ENCODE measurements at regions of chr7 and their contacts with region 1.

Region 1: DNA sequence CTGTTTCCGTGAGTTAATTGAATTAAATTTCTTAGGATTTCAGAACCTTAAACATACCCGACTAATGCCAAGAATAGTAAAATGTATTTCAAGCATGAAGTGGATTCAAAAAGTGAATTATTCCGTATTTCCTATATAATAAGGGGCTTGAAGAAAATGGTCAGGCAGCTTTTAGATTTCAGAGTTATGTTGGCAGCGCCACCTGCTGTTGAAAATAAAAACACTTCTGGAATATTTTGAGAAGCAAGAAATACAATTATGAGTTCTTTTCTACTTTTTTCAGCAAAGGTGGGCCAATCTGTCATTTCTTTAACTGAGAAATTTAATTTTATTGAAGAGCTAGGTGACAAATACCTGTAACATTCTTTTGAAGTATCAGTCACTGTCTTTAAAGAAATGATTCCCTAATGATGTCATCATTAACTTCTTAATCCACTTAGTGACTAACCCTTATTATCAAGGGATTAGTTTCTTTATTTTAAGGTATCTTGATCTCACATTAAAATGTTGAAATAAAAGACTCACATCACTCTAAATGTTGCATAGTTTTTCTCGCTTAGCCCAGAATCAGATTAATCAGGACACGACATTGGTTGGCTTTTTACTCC is 36.6 kb upstream of the AGR3 start:
- DNase-seq: no peak
- H3K4me3 Mint-ChIP-seq: no peak overlapping the region
- H3K27ac Mint-ChIP-seq: no peak overlapping the region
- H3K4me1 Mint-ChIP-seq: peaks cover 32% of the 10 kb centered on the region
- H3K27me3 Mint-ChIP-seq: peaks cover 3% of the 10 kb centered on the region

Region 2: DNA sequence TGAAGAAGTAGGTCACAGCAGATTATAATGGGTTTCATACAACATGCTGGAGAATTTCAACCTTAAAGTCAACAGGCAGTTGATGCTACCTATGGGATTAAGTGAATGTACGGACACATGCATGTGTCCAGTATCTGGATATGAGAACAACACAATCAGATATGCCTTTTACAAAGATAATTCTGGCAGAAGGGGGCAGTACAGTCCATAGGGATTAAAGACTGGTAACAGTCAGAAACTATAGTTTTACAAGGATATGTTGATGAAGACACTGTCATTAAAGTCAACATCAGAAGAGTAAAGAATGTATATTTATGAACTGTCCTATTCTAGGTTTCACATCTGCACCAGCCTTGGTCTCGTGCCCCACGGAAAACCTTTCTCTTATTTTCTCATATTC is 314.3 kb before region 1 on chr7:
- intact Hi-C with region 1: loop called (anchors 5 kb)
- DNase-seq: no peak
- H3K4me3 Mint-ChIP-seq: no peak overlapping the region
- H3K27ac Mint-ChIP-seq: no peak overlapping the region
- H3K4me1 Mint-ChIP-seq: peaks cover 4% of the 10 kb centered on the region
- H3K27me3 Mint-ChIP-seq: no peaks in the 10 kb centered on the region

Region 3: GRCh38 chr7:16645593-16646471 is 272.6 kb before region 1 on chr7 and contains the starts of genes ANKMY2 and BZW2:
- intact Hi-C with region 1: loop called (anchors 10 kb)
- DNase-seq: peak; percentile 93
- H3K4me3 Mint-ChIP-seq: peak within 1 kb of the TSS; percentile 97
- H3K27ac Mint-ChIP-seq: peak within 1 kb of the TSS; percentile 97
- H3K4me1 Mint-ChIP-seq: peaks cover 51% of the 10 kb centered on the region
- H3K27me3 Mint-ChIP-seq: no peaks in the 10 kb centered on the region
- total RNA-seq, gene ANKMY2: 8.7 TPM in 2 replicates
- total RNA-seq, gene BZW2: 82.9 and 90.2 TPM in 2 replicates

Region 4: DNA sequence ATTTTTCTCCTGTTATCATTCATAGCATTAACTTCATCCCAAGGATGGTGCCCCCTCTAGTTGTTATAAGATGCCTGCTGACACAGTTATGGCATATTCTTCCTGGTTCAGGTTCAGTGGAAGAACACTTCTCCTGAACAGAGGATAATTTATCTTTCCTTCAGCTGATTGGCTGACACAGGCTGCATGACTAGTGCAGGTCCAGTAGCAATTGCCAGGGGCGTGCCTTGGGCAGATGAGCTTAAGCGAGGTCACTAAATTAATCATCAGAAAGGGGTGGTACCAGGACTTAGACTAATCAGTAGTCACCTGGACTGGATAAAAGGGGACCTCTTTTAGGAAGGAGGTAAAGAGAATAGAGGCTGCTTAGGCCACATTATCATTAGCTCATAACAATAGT is 230.1 kb before region 1 on chr7:
- intact Hi-C with region 1: no loop called
- DNase-seq: no peak
- H3K4me3 Mint-ChIP-seq: no peak overlapping the region
- H3K27ac Mint-ChIP-seq: no peak overlapping the region
- H3K4me1 Mint-ChIP-seq: peaks cover 20% of the 10 kb centered on the region
- H3K27me3 Mint-ChIP-seq: no peaks in the 10 kb centered on the region

Region 5: DNA sequence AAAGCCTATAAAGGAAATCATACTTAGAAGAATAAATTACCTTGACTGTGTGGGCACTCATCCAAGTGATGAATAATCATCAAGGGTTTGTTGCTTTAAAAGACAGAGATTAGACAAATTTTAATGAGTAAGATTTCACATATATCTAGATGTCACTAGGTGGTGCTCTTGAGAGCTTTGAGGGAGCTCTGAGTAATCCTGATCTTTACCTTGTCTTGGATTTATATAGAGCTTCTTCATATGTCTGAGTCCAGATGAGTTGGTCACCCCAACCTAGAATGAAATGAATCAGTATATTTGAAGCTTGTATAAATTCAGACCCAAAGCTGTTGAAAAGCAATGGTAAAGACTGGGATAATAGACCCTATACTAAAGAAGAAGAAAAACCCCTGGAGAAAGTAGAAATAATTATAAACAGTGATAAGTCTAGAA is 117.3 kb before region 1 on chr7:
- intact Hi-C with region 1: loop called (anchors 1 kb)
- DNase-seq: no peak
- H3K4me3 Mint-ChIP-seq: no peak overlapping the region
- H3K27ac Mint-ChIP-seq: no peak overlapping the region
- H3K4me1 Mint-ChIP-seq: no peaks in the 10 kb centered on the region
- H3K27me3 Mint-ChIP-seq: peaks cover 9% of the 10 kb centered on the region

Region 6: DNA sequence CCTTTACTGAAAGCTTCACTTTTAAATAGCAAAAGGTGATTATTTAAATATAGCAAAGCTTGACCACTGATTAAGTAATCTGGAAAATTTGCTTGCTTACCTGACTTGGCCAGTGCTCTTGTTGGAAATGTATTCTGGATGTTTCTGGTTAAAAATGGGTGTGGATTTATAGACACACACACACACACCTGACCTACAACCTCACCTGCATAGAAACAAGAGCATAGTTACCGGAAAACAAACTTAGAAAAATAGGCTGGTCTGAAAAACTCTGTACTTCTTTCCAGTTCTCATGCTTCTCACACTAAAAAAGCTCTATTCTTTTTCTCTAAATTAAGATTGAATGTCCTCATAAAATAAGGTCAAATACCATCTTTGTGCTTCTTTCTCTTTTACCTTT is 36.5 kb before region 1 on chr7 and contains the start of gene AGR3:
- intact Hi-C with region 1: no loop called
- DNase-seq: no peak
- H3K4me3 Mint-ChIP-seq: no peak within 1 kb of the TSS
- H3K27ac Mint-ChIP-seq: no peak within 1 kb of the TSS
- H3K4me1 Mint-ChIP-seq: no peaks in the 10 kb centered on the region
- H3K27me3 Mint-ChIP-seq: peaks cover 4% of the 10 kb centered on the region
- total RNA-seq, gene AGR3: not detected in 2 replicates

Region 7: DNA sequence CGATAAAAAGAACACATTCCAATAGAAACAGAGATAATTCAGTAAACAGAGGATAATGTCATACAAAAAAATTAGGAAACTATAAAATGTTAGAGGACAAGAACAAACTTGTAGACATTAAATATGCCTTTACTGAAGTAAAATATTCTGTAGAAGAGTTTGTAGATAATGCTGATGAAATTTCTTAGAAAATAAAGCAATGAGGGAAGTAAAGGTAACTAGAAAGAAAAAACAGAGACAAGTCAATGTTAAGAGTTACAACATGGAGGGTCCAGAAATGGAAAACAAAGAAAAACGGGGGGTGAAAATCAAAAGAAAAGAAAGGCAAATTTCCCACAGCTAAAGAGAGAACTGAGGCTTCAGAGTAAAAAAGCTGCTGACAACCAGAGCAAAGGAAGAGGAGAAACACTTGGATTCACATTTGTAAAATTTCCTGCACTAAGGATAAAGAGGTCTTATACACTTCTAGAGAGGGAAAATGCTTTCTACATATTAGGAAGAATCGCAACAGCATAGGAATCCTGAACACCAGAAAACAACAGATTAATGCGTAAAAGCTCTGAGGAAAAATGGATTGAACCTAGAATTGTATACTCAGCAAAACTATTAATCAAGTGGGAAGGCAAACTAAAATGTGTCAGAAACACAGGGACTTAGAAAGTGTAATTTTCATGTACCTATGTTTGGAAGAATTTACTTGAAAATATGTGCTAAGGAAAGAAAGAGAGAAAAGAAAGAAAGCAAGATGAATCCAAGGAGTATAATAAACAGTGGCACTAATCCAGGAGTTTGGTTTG is 18.4 kb after region 1 on chr7:
- intact Hi-C with region 1: loop called (anchors 2 kb)
- DNase-seq: no peak
- H3K4me3 Mint-ChIP-seq: no peak overlapping the region
- H3K27ac Mint-ChIP-seq: no peak overlapping the region
- H3K4me1 Mint-ChIP-seq: peaks cover 47% of the 10 kb centered on the region
- H3K27me3 Mint-ChIP-seq: peaks cover 8% of the 10 kb centered on the region

Region 8: DNA sequence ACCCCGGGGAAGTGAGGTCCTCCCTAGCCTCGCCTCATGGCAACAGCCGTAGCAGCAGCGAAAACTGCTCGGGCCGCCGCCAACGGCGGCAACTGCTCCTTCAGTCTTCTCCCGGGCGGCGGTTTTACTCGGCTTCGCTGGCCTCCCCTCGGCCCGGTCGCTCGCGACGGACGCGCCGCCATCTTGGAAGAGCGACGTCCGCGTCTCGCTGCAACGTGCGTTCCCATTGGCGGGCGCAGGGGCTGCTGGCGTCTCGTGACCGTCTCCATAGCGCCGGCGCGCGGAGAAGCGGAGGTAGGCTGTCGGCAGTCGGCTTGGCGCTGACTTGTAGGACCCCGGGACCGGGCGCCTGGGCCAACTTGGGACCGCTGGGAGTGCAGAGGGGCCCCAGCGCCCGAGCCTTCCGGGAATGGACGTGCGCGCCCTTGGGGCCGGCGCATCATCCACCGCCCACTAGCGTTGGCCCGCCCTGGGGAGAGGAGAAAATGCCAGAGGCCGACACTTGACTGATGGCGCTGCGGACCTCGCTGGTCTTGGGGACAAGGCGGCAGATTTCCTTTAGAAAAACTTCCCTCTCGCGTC is 1022.0 kb after region 1 on chr7 and contains the start of gene SNX13:
- intact Hi-C with region 1: loop called (anchors 5 kb)
- DNase-seq: peak; percentile 84
- H3K4me3 Mint-ChIP-seq: peak within 1 kb of the TSS; percentile 97
- H3K27ac Mint-ChIP-seq: peak within 1 kb of the TSS; percentile 94
- H3K4me1 Mint-ChIP-seq: peaks cover 36% of the 10 kb centered on the region
- H3K27me3 Mint-ChIP-seq: peaks cover 10% of the 10 kb centered on the region
- total RNA-seq, gene SNX13: 21.2 and 21.9 TPM in 2 replicates

Measured in activated T-helper 2 cell treated with anti-CD3 and anti-CD28 coated beads, Interferon-gamma antibody, Interleukin-2, Interleukin-4, amounts not matched to agents 10 μg/mL and 5 μg/mL and 100 μg/mL, durations not matched to agents 14 hours and 24 hours and 36 hours (primary cell).